AG04450 (cell line): ENCODE measurements at regions of chr17 and their contacts with region 1.

Region 1: DNA sequence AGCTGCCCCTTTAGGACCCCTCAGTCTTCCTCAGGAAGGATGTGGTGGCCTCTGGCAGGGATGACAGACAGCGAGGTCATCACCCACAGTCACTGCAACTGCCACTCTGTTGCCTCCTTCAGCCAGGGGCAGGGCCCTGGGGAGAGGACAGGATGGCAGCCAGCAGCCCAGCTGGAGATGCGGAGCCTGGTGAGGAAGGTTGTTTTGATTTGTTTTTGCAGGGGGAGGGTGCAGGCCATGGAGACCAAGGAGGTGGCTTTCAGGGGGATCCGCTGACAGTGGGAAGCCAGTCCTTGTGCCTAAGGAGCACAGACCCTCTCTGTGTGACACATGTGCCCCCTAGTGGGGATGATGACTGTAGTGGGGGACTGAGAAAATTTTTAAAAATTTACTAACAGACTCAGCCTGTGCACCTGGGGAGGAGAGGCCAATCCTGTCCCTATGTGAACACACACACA is 7.4 kb downstream of the PRCD start:
- DNase-seq: no peak
- H3K4me3 ChIP-seq: no peak overlapping the region
- H3K27ac ChIP-seq: peak overlapping the region; percentile 87
- H3K27me3 ChIP-seq: peaks cover 2% of the 10 kb centered on the region
- CTCF ChIP-seq: peak; percentile 69

Region 2: DNA sequence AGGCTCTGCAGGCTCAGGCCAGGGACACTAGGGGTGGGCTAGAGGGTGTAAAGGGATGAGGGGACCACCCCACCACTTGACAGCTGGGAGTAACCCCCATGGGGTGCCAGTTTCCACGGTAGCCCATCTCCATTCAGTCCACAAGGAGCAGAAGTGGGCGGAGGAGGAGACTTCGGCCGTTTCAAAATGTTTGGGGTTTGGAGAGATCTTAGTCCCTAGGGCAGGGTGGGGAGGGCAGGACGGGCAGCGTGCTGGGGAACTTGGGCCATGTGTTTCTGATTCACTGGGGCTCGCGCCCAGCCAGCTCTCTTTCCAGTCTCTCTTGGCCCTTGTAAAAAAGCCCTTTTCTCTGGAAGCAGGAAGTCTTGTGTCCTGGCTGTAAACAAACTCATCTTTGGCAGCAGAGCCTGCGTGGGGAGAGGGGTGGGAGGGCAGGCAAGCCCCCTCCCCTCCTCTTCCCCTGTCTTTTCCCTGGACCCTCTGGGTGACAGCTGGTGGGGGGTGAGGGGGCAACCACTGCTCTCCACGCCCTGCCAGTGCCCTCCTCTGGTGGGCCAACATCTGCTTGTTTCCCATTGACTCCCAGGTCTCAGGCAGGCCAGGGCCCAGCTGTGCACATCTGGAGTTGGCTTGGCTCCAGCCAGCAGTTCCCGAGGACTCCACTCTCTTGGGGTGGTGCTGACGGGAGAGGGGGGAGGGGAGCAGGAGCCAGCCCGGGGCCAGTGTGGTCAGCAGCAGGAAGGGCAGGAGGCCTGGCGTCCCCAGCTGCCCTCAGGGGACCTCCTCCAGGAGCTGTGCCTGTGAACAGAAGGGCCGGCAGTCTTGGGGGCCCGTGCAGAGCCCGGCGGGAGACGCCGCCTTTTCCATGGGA is 17.8 kb before region 1 on chr17:
- CTCF ChIA-PET with region 1: interaction called, 41 read pairs
- POLR2A ChIA-PET with region 1: interaction called, 14 read pairs
- DNase-seq: no peak
- H3K4me3 ChIP-seq: no peak overlapping the region
- H3K27ac ChIP-seq: peak overlapping the region; percentile 97
- H3K27me3 ChIP-seq: no peaks in the 10 kb centered on the region
- CTCF ChIP-seq: no peak

Region 3: DNA sequence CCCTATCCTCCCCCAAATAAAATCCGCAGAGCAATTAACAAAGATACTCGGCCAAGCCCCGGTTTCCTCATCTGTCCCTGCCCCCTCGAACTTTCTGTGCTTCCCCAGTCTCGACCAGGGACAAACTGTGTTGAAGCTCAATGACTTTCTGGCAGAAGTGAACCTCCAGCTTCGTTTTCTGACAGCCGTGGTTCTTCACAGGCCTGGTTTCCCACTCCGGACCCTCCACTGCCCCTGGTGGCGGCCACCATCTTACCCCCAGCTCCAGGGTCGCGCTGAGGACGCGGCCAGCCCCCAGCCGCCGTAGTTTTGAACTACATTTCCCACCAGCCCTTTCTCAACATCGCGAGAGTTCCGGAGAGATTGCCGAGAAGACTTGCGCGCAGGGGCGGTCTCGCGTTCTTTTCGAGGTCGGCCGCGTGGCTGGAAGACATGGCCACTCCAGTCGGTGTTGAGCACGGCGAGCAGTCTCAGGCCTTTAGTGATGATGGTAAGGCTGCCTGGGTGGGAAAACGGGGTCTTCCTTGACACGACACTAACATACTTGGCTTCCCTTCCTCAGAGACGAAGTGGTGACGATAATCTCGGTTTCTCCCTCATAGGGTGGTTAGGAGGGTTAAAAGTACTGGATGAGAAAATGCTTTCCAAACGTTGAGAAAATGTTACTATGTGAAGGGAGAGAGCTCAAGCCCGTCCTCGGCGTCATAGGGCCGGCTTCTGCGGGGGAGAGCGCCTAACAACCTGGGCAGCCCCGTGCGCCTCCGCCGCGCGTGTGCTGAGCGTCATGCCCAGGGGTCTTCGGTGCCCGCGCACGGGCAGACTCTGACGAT is 10.4 kb after region 1 on chr17:
- CTCF ChIA-PET with region 1: interaction called, 6 read pairs
- POLR2A ChIA-PET with region 1: interaction called, 12 read pairs
- DNase-seq: peak; percentile 91
- H3K4me3 ChIP-seq: peak overlapping the region; percentile 95
- H3K27ac ChIP-seq: peak overlapping the region; percentile 68
- H3K27me3 ChIP-seq: no peaks in the 10 kb centered on the region
- CTCF ChIP-seq: peak; percentile 70

Region 4: GRCh38 chr17:76574166-76574565 is 27.0 kb after region 1 on chr17:
- CTCF ChIA-PET with region 1: no interaction called
- POLR2A ChIA-PET with region 1: no interaction called
- DNase-seq: no peak
- H3K4me3 ChIP-seq: no peak overlapping the region
- H3K27ac ChIP-seq: no peak overlapping the region
- H3K27me3 ChIP-seq: no peaks in the 10 kb centered on the region
- CTCF ChIP-seq: no peak

Region 5: GRCh38 chr17:76612977-76613851 is 66.0 kb after region 1 on chr17:
- CTCF ChIA-PET with region 1: no interaction called
- POLR2A ChIA-PET with region 1: no interaction called
- DNase-seq: no peak
- H3K4me3 ChIP-seq: no peak overlapping the region
- H3K27ac ChIP-seq: no peak overlapping the region
- H3K27me3 ChIP-seq: no peaks in the 10 kb centered on the region
- CTCF ChIP-seq: no peak